Ascending aorta (tissue), 2 donors: ENCODE measurements at regions of chr11 and their contacts with region 1.

Region 1: GRCh38 chr11:69010964-69011623 is 2.0 kb downstream of the MRGPRF start:
- DNase-seq: peak in 1 of 2 donors; percentile 91
- H3K4me3 ChIP-seq: peak overlapping the region; percentile 75 to 84
- H3K27ac ChIP-seq: peak overlapping the region; percentile 93 to 95
- H3K4me1 ChIP-seq: peaks cover 18 to 49% of the 10 kb centered on the region in 2 donors
- H3K27me3 ChIP-seq: no peaks in the 10 kb centered on the region
- CTCF ChIP-seq: no peak

Region 2: GRCh38 chr11:68704887-68705286 is 306.2 kb before region 1 on chr11:
- intact Hi-C with region 1: no loop called
- DNase-seq: no peak
- H3K4me3 ChIP-seq: no peak overlapping the region
- H3K27ac ChIP-seq: no peak overlapping the region
- H3K4me1 ChIP-seq: no peaks in the 10 kb centered on the region
- H3K27me3 ChIP-seq: no peaks in the 10 kb centered on the region
- CTCF ChIP-seq: no peak

Region 3: GRCh38 chr11:68839054-68839865 is 171.8 kb before region 1 on chr11:
- intact Hi-C with region 1: loop called (anchors 2 kb)
- DNase-seq: peak; percentile 72 to 98
- H3K4me3 ChIP-seq: peak overlapping the region; percentile 87 to 94
- H3K27ac ChIP-seq: peak overlapping the region; percentile 95
- H3K4me1 ChIP-seq: peaks cover 19 to 68% of the 10 kb centered on the region in 2 donors
- H3K27me3 ChIP-seq: no peaks in the 10 kb centered on the region
- CTCF ChIP-seq: peak in 1 of 3 experiments; percentile 9

Region 4: DNA sequence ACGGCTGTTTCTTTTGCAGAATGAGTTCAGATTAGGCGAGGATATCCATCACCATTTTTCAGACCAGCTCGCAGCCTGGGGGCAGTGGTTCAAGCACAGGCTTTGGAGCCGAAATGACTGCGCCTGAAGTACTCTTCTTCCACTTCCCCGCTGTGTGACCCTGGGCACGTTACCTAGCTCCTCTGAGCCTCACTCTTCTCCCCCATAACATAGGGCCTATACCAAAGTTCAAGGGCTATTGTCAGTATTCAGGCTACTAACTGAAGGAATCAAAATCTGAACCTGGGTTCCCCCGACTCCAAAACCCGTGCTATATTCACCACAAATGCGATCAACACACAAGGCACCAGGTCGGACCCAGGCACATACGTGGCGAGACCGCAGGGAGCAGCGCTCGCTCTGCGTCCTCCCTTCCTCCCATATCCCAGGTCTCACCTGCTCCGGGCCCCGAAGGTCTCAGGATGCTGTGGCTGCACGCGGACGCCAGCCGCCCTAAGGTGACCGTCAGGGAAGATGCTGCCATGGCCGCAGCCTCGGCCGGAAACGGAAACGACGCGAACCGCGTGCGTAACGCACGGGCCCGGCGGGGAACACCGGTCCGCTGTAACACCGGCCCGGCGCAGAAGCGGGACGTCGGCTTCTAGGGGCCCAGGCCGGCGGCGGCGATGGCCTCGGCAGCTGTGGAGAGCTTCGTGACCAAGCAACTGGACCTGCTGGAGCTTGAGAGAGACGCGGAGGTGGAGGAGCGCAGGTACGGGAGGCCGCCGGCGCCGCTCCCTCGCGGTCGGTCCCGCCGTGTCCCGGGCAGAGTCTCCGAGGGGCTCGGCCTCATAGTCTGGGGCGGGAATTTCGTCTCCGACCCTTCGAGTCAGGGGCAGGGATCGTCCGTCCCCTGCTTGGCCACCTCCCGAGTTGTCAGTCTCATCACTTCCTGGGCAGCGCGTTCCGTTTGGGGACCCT is 107.5 kb before region 1 on chr11 and contains the starts of genes IGHMBP2 and MRPL21:
- intact Hi-C with region 1: loop called (anchors 5 kb)
- DNase-seq: peak in 1 of 2 donors; percentile 91
- H3K4me3 ChIP-seq: peak within 1 kb of the TSS; percentile 75 to 77
- H3K27ac ChIP-seq: peak within 1 kb of the TSS; percentile 78 to 85
- H3K4me1 ChIP-seq: peaks cover 0 to 17% of the 10 kb centered on the region in 2 donors
- H3K27me3 ChIP-seq: no peaks in the 10 kb centered on the region
- CTCF ChIP-seq: no peak
- total RNA-seq, gene IGHMBP2: 52.0 TPM
- total RNA-seq, gene MRPL21: 14.2 TPM

Region 5: GRCh38 chr11:68946465-68947036 is 64.5 kb before region 1 on chr11:
- intact Hi-C with region 1: loop called (anchors 2 kb)
- DNase-seq: peak in 1 of 2 donors; percentile 82
- H3K4me3 ChIP-seq: peak overlapping the region; percentile 11 to 20
- H3K27ac ChIP-seq: peak overlapping the region; percentile 70 to 82
- H3K4me1 ChIP-seq: peaks cover 25 to 36% of the 10 kb centered on the region in 2 donors
- H3K27me3 ChIP-seq: no peaks in the 10 kb centered on the region
- CTCF ChIP-seq: no peak

Region 6: DNA sequence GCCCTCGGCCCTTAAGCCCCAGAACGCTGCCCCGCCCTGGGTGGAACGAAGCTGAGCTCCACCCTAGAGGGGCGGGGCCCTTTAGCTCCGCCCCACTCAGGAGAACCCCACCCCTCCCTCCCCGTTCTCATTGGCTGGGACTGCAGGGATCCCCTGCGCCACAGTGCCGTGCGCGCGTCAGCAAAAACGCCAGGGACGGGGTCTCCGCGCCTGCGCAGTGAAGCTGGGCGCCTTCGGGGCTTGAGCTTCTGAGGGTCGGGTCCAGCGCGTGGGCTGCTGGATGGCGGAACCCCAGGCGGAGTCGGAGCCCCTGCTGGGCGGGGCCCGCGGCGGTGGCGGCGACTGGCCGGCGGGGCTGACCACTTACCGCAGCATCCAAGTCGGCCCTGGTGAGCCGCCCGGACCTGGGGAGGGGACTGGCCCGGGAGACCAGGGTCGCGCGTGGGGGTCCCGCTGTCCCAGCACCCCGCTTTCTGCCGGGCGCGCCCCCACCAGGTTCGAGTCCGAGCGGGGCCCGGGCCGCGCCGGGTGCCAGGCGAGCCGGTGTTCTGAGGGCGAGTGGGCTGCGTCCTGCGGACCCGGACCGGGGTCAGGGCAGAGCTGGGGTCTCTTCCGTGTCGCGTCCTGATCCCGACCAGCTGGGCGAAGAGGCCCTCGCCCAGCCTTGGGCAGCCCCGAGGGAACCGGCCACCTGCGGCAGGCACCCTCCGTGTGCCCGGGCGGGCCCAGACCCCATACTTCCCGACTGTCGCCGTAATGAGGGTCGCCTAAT is 37.8 kb after region 1 on chr11 and contains the start of gene TPCN2:
- intact Hi-C with region 1: loop called (anchors 1 kb)
- DNase-seq: peak; percentile 65 to 95
- H3K4me3 ChIP-seq: peak within 1 kb of the TSS; percentile 69 to 97
- H3K27ac ChIP-seq: peak within 1 kb of the TSS; percentile 74 to 93
- H3K4me1 ChIP-seq: peaks cover 6 to 23% of the 10 kb centered on the region in 2 donors
- H3K27me3 ChIP-seq: no peaks in the 10 kb centered on the region
- CTCF ChIP-seq: no peak
- total RNA-seq, gene TPCN2: 24.9 TPM

Region 7: GRCh38 chr11:69075421-69076128 is 64.5 kb after region 1 on chr11:
- intact Hi-C with region 1: loop called (anchors 2 kb)
- DNase-seq: peak; percentile 24 to 94
- H3K4me3 ChIP-seq: no peak overlapping the region
- H3K27ac ChIP-seq: peak overlapping the region; percentile 21 to 62
- H3K4me1 ChIP-seq: peaks cover 0 to 8% of the 10 kb centered on the region in 2 donors
- H3K27me3 ChIP-seq: no peaks in the 10 kb centered on the region
- CTCF ChIP-seq: no peak